Activated CD4-positive, alpha-beta T cell treated with anti-CD3 and anti-CD28 coated beads, Interleukin-2, amount 10 ng/mL, durations not matched to agents 24 days and 14 days (primary cell): ENCODE measurements at regions of chr14 and their contacts with region 1.

Region 1: DNA sequence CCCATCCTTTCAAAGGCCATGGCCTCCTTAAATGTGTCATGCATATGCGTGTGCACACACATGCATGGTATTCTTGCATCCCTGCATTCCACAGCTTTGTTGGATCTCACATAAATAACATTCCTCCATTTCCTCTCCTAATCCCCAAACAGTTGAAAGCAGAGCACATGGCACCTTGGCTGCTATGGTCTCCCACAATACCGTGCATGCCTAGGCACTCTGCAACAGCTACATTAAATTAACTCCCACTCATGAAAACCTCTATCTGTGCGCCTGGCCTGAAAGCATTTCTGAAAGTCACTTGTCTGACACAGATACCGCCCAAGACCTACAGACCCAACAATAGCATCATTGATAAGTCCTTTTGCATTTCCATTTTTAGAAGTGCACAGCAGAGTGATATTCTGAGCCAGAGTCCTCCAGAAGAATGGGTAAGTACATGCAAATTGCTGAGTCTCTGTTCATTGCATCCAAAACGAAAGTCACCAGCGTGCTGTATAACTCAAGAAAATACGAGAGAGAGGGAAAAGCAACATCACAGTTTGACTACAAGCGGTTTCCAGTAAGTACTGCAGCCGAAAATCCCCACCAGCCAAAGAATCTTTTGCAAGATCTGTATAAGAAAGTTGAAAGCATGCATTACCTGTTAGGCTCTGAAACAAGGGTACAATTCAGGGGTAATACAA is 436 bp downstream of the ASB2 start:
- DNase-seq: peak; percentile 86
- H3K4me3 Mint-ChIP-seq: peak overlapping the region; percentile 81
- H3K27ac Mint-ChIP-seq: peak overlapping the region; percentile 98
- H3K4me1 Mint-ChIP-seq: peaks cover 78% of the 10 kb centered on the region
- H3K27me3 Mint-ChIP-seq: peaks cover 1% of the 10 kb centered on the region

Region 2: GRCh38 chr14:93892923-93893558 is 82.9 kb before region 1 on chr14:
- intact Hi-C with region 1: no loop called
- DNase-seq: peak; percentile 90
- H3K4me3 Mint-ChIP-seq: no peak overlapping the region
- H3K27ac Mint-ChIP-seq: no peak overlapping the region
- H3K4me1 Mint-ChIP-seq: no peaks in the 10 kb centered on the region
- H3K27me3 Mint-ChIP-seq: peaks cover 7% of the 10 kb centered on the region

Region 3: DNA sequence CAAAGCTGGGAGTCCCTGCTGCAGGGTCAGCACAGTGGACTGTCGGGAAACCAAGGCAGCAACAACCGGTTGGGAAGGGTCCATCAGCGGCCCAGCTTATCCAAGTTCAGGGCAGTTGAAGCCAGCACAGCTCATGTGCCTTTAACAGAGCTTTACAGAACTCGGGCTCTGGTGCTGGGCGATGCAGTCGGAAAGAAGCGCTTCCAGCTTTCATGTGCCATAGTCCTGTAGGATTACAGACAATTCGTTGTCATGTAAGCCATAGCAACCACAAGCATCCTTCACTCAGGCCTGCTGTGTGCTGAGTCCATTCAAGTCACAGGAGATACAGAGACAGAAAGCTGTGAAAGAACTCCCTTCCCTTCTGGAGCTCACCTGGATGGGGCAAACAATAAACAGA is 52.3 kb before region 1 on chr14:
- intact Hi-C with region 1: no loop called
- DNase-seq: no peak
- H3K4me3 Mint-ChIP-seq: no peak overlapping the region
- H3K27ac Mint-ChIP-seq: no peak overlapping the region
- H3K4me1 Mint-ChIP-seq: no peaks in the 10 kb centered on the region
- H3K27me3 Mint-ChIP-seq: peaks cover 2% of the 10 kb centered on the region

Region 4: GRCh38 chr14:93959239-93960107 is 16.5 kb before region 1 on chr14:
- intact Hi-C with region 1: loop called (anchors 1 kb)
- DNase-seq: peak; percentile 98
- H3K4me3 Mint-ChIP-seq: peak overlapping the region; percentile 86
- H3K27ac Mint-ChIP-seq: peak overlapping the region; percentile 100
- H3K4me1 Mint-ChIP-seq: peaks cover 93% of the 10 kb centered on the region
- H3K27me3 Mint-ChIP-seq: no peaks in the 10 kb centered on the region

Region 5: GRCh38 chr14:94001501-94002396 is 25.8 kb after region 1 on chr14:
- intact Hi-C with region 1: loop called (anchors 1 kb)
- DNase-seq: peak; percentile 88
- H3K4me3 Mint-ChIP-seq: peak overlapping the region; percentile 32
- H3K27ac Mint-ChIP-seq: peak overlapping the region; percentile 77
- H3K4me1 Mint-ChIP-seq: peaks cover 39% of the 10 kb centered on the region
- H3K27me3 Mint-ChIP-seq: no peaks in the 10 kb centered on the region

Region 6: GRCh38 chr14:94026173-94026888 is 50.4 kb after region 1 on chr14 and contains the start of gene OTUB2:
- intact Hi-C with region 1: loop called (anchors 2 kb)
- DNase-seq: peak; percentile 99
- H3K4me3 Mint-ChIP-seq: peak within 1 kb of the TSS; percentile 75
- H3K27ac Mint-ChIP-seq: peak within 1 kb of the TSS; percentile 52
- H3K4me1 Mint-ChIP-seq: peaks cover 41% of the 10 kb centered on the region
- H3K27me3 Mint-ChIP-seq: no peaks in the 10 kb centered on the region
- total RNA-seq, gene OTUB2: 1.3 and 1.7 TPM in 2 replicates